Heart right ventricle (tissue), 16 donors: ENCODE measurements at regions of chr9 and their contacts with region 1.

Region 1: GRCh38 chr9:135992486-135993408 is 31.6 kb upstream of the UBAC1 start:
- DNase-seq: peak; percentile 85 to 91
- ATAC-seq: peak; percentile 86 to 95 (median 92)
- H3K4me3 ChIP-seq: peak overlapping the region in 9 of 10 donors; percentile 3 to 49 (median 33)
- H3K27ac ChIP-seq: peak overlapping the region; percentile 86 to 96 (median 93)
- H3K4me1 ChIP-seq: peaks cover 13 to 64% (median 40%) of the 10 kb centered on the region in 9 donors
- H3K27me3 ChIP-seq: peaks cover 0 to 15% (median 0%) of the 10 kb centered on the region in 7 donors
- CTCF ChIP-seq: peak in 2 of 9 donors; percentile 19 to 20

Region 2: GRCh38 chr9:135655337-135655736 is 337.4 kb before region 1 on chr9:
- intact Hi-C with region 1: no loop called
- DNase-seq: no peak
- ATAC-seq: no peak
- H3K4me3 ChIP-seq: no peak overlapping the region
- H3K27ac ChIP-seq: no peak overlapping the region
- H3K4me1 ChIP-seq: no peaks in the 10 kb centered on the region
- H3K27me3 ChIP-seq: peaks cover 0 to 32% (median 9%) of the 10 kb centered on the region in 7 donors
- CTCF ChIP-seq: no peak

Region 3: DNA sequence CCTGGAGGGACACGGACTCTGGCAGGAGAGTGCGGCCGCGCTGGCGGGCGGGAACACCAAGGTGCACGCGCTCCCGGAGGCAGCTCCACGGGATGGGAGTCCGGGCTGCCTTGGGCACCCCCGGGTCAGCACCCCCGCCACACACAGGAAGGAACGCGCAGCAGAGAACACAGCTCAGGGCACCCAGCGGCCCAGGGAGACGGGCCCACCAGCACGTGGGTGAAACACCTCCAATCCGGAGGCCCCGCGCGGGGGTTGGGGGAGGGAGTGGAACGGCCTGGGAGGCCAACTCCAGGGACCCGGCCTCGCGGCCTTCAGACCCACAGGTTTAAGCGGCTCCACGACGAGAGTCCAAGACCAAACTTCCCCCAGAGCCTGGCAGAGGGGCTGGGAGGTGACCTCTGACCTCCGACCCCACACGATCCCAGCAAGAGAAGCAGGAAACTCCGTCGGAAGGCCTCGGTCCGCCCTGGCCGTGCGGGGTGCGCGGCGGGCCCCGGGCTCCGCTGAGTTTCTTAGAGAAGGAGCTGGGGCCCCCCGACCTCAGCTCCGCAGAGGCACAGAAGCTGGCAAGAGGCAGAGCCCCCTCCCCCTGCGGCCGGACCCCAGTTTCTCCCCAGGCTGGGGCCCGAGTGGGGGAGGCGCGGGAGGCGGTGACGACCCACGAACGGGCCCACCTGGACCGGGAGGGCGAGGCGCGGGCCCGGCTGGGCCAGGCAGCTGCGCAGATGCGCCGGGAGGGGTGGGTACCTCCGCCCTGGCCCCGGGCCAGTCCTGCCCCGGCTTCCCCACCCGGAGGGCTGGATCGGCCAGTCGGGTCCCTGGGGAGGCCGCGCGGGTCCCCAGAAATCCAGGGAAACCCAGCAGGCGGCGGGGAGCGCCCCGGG is 101.5 kb after region 1 on chr9:
- intact Hi-C with region 1: loop called in 1 of 10 experiments (anchors 1 kb)
- DNase-seq: peak; percentile 83 to 85
- ATAC-seq: peak; percentile 53 to 84 (median 74)
- H3K4me3 ChIP-seq: peak overlapping the region; percentile 68 to 94 (median 86)
- H3K27ac ChIP-seq: peak overlapping the region; percentile 93 to 99 (median 96)
- H3K4me1 ChIP-seq: peaks cover 15 to 71% (median 67%) of the 10 kb centered on the region in 9 donors
- H3K27me3 ChIP-seq: peaks cover 0 to 7% (median 0%) of the 10 kb centered on the region in 7 donors
- CTCF ChIP-seq: peak in 3 of 9 donors; percentile 14 to 27 (median 22)

Region 4: GRCh38 chr9:136245219-136246150 is 252.7 kb after region 1 on chr9 and contains the start of gene QSOX2:
- intact Hi-C with region 1: loop called in 1 of 10 experiments (anchors 10 kb)
- DNase-seq: peak; percentile 81 to 88
- ATAC-seq: peak; percentile 81 to 92 (median 88)
- H3K4me3 ChIP-seq: peak within 1 kb of the TSS; percentile 58 to 89 (median 80)
- H3K27ac ChIP-seq: peak within 1 kb of the TSS in 7 of 10 donors; percentile 25 to 55 (median 37)
- H3K4me1 ChIP-seq: peaks cover 5 to 49% (median 28%) of the 10 kb centered on the region in 9 donors
- H3K27me3 ChIP-seq: no peaks in the 10 kb centered on the region
- CTCF ChIP-seq: no peak
- total RNA-seq, gene QSOX2: 4.6 to 9.1 (median 7.7) TPM

Region 5: DNA sequence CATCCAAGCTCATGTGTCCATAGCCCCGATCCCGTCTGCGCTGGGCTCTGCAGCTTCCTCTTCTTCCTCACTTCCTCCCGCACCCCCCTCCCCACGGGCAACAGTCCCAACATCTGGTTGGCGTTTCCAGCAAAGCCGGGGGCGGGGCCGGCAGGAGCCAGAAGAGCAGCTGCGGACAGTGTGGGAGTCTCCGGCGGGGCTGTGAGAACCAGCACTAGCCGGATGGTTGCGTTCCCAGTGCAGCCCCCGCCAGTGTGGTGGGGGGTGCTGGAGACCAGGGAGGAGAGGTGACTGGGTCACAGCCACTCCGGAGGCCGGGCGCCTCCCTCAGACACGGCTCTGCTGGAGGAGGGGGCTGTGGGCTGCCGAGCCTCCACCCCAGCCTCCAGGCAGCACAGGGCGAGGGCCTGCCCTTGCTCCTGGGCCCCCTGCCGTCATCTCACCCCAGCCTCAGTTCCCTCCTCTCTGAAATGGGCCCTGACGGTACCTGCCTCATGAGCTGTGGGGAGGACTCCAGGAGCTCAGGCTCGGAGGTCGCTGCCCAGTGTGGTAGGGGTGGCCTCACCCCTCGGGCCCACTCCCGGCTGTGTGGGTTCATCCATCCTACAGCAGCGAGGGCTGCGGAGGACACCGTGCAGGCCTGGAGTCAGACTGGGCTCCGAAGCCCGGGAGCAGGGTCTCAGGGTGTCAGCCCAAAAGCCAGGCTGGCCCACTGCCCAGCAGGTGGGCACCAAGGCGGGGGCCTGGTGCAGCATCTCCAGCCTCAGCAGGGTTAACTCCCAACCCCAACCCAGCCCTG is 594.6 kb after region 1 on chr9:
- intact Hi-C with region 1: no loop called
- DNase-seq: peak; percentile 88 to 91
- ATAC-seq: peak; percentile 51 to 79 (median 70)
- H3K4me3 ChIP-seq: peak overlapping the region in 6 of 10 donors; percentile 3 to 40 (median 24)
- H3K27ac ChIP-seq: peak overlapping the region in 9 of 10 donors; percentile 52 to 91 (median 73)
- H3K4me1 ChIP-seq: peaks cover 31 to 84% (median 71%) of the 10 kb centered on the region in 9 donors
- H3K27me3 ChIP-seq: peaks cover 0 to 8% (median 0%) of the 10 kb centered on the region in 7 donors
- CTCF ChIP-seq: no peak